AG04449 (cell line): ENCODE measurements at regions of chr14 and their contacts with region 1.

Region 1: GRCh38 chr14:23631702-23632460 is 4.3 kb upstream of the DHRS2 start:
- DNase-seq: peak; percentile 38
- H3K4me3 ChIP-seq: 0 out of 2 replicates have a peak overlapping the region, but pooled peaks have one; percentile 9
- CTCF ChIP-seq: peak; percentile 89

Region 2: DNA sequence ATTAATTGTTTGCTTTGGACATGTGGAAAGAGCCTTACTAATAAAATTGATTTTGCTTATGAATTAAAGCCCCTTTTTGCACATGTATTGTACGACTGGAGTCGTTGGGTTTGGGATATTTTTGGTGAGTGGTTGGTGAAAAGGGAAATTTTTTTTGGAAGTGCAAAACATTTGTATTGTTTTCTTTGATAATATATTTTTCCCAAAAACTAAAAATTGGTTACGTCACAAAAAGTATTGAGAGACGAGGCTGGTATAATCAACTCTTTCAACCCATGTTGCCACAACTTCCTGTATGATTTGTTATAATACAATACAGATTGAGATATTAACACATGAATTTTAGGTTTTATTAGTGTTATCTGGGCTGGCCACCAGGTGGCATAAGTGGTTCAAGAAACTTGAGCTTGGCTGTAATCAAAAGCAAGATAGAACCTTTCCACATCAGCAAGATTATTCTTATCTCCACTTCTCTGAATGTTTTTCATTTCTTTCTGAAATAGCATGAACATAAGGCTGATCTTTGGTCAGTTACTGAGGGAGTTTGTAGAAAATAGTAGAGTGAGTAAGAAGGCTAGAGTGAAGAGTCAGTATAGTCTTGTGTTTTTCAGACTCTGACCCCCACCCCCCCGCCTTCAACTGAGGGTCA is 153.6 kb before region 1 on chr14:
- CTCF ChIA-PET with region 1: interaction called, 35 read pairs
- POLR2A ChIA-PET with region 1: no interaction called
- DNase-seq: peak; percentile 33
- H3K4me3 ChIP-seq: no peak overlapping the region
- CTCF ChIP-seq: peak; percentile 50

Region 3: DNA sequence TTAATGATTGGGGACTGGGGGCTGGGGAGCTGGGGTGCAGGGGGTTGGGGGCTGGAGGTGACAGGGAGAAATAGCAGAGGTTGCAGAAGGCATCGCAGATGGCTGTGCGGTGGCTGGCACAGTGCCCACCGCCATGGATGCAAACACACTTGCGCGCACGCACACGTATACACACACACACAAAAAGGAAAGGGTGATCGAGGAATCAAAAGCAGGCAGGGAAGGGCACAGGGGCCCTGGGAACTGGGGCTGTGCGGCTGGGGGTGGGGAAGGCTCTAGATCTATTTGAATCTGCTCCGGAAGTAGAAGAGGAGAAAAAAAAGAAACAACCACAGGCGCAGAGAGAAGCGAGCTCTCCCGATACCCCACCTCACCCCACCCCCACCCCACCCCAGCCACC is 119.7 kb before region 1 on chr14:
- CTCF ChIA-PET with region 1: no interaction called
- POLR2A ChIA-PET with region 1: no interaction called
- DNase-seq: no peak
- H3K4me3 ChIP-seq: no peak overlapping the region
- CTCF ChIP-seq: no peak

Region 4: DNA sequence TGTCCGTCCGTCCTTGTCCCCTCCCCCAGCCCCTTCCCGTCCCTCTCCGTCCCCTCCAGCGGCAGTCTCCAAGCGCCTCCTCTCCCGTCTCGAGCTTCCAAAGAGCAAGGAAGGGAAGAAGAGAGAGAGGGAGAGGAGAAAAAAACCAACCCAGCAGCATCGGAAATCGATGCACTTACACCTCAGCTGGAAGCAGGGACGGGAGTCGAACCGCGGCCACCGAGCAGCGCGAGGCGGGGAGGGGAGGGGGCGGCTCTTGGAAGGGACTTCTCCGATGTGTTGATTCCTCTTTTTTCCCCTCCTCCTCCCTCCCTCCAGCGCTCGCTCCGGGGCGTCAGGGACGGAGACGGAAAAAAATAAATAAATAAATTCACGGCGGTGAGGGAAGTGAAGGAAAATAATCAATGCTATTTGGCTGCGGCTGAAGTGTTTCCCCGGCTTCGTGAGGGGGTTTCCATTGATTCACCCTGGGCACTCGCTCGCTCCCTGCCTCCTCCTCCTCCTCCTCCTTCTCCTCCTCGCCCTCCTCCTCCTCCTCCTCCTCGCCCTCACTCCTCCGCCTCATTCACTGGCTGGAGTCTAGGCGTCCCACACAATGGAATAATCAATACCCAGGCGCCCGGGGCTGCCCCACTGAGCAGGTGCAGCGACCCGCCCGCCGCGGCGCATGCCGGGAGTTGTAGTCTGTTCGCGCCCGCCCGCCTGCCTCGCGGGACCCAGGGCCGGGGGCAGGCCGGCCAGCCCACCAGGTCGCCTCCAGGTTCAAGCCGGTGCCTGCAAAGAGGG is 80.5 kb before region 1 on chr14 and contains the start of gene ZFHX2:
- CTCF ChIA-PET with region 1: no interaction called
- POLR2A ChIA-PET with region 1: no interaction called
- DNase-seq: no peak
- H3K4me3 ChIP-seq: peak within 1 kb of the TSS; percentile 64
- CTCF ChIP-seq: no peak

Region 5: DNA sequence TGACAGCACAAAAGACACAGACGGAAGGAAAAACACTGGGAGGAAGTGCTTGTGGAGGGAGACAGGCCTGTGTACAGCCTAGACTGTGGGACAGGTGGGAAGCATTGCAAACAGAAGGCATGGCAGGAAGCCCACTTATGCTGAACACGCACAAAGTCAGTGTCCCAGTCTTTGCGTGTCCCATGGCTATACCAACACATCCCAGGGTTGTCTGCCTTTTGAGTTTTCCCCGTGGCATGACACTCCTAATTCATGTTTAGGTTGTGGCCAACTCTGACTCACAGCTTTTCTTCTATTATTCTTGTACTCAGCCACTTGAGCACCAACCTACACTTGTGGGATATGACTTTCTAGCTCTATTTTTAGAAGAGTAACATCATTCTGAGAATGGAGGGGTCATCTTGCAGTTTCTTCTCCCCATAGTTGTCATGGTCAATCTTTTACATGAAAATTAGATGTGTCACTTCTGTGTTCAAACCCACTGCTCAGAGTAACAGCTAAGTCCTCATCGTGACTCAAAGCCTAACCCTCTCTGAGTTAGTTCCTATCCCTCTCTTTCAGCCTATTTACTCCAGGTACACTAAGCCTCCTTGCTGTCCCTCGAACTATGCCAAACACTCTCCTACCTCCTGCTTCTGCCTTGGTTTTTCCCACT is 25.8 kb before region 1 on chr14:
- CTCF ChIA-PET with region 1: interaction called, 39 read pairs
- POLR2A ChIA-PET with region 1: no interaction called
- DNase-seq: no peak
- H3K4me3 ChIP-seq: no peak overlapping the region
- CTCF ChIP-seq: no peak

Region 6: DNA sequence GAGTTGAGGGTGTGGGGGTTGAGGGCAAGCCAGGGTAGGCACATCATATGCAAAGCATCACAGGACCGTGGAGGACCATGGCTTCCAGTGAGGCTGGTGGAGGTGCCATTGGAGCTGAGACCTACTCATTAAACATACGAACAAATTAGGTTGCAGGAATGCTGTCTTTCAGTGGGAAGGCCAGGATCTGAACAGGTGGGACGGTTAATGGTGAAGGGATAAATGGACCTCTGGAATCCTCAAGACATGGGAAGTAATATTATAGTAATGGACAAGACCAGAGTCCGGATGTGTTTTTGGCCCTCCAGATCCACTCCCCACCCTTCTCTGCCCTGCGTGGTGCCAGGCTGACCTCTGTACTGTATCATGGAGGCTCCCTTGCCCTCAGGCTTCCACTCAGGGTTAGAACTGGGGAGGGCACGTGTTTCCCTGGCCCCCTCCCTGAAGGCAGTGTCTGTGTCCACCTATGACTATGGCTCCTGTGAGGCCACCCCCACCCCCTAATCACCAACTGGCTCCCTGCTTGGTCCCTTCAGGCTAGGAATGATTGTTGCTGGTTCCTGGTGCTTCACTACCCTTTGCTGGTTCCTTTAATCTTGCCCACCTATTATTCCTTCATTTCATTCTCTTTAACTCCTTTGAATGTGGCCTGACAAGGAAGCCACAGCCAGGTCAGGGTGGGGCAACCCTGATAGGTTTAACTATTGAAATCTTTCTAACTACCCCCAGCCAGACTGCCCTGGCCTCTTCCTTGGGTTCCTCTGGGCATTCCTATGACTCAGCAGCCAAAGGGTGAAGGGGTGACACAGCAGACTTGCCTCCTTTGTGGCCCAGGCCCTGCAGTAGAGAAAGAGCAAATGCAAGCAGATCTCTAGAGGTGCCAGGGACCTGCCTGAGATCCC is 15.0 kb after region 1 on chr14:
- CTCF ChIA-PET with region 1: interaction called, 54 read pairs
- POLR2A ChIA-PET with region 1: no interaction called
- DNase-seq: no peak
- H3K4me3 ChIP-seq: no peak overlapping the region
- CTCF ChIP-seq: no peak

Region 7: DNA sequence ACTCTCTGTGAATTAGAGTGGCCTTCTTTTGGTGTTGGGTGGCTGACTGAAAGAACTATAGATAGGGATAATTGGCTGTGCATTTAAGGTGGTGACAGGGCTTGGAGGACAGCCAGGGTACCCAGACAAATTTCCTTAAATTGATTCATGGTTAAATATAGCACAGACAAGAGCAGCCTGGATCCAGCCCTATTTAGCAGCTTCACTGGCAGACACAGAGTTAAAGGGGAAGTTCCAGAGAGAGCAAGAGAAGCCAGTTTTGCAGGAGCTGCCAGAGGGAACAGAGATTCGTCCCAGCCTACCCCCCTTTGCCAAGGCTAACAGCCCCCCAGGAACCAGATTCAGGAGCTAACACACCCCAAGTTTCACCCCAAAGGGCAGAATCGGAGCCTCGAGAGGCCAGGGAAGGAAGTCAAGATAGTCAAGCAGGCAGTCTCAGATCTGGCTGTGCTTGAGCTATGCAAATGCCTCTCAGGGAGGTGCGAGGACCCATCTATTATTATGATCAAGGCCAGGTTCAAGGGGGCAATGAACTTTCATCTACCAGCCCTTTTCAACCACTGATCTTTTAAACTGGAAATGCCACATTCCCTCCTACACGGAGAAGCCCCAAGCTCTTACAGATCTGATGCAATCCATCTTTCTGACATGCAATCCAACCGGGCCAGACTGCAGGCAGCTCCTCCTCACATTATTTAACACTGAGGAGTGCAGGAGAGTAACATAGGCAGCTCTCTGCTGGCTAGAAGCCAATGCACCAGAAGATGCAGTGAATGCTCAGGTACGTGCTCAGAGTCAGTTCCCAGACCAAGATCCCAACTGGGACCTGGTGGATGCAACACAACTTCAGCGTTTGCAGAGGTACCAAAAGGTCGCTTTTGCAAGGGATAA is 62.4 kb after region 1 on chr14:
- CTCF ChIA-PET with region 1: interaction called, 25 read pairs
- POLR2A ChIA-PET with region 1: no interaction called
- DNase-seq: no peak
- H3K4me3 ChIP-seq: no peak overlapping the region
- CTCF ChIP-seq: no peak

Region 8: GRCh38 chr14:23916004-23916403 is 284.1 kb after region 1 on chr14:
- CTCF ChIA-PET with region 1: interaction called, 125 read pairs
- POLR2A ChIA-PET with region 1: no interaction called
- DNase-seq: no peak
- H3K4me3 ChIP-seq: no peak overlapping the region
- CTCF ChIP-seq: no peak

Region 9: DNA sequence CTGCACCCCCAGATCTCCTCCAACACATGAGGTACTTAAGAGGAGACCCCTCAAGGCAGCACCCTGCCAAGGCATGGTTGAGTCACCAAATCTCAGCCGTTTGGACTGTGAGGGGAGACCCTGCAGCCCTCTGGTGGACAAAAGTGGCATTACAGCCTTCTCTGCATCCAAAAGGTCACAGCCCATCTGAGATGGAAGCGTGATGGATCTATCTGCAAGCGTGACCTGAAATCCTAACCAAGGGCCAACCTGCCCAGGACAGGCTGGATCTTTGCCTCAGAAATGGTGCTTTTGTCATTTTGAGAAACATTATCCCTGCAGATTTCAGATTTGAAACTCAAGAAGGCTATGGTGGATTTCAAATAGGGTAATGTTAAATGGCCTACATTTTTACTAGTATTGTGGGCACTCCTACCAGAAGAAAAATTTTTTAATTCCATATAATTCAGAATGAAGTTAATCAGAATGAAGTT is 298.0 kb after region 1 on chr14:
- CTCF ChIA-PET with region 1: interaction called, 108 read pairs
- POLR2A ChIA-PET with region 1: no interaction called
- DNase-seq: no peak
- H3K4me3 ChIP-seq: no peak overlapping the region
- CTCF ChIP-seq: peak; percentile 87